A673 (cell line): ENCODE measurements at regions of chr6 and their contacts with region 1.

Region 1: GRCh38 chr6:20877008-20877937 is 343.0 kb downstream of the CDKAL1 start:
- DNase-seq: peak; percentile 17
- H3K4me3 ChIP-seq: no peak overlapping the region
- H3K27ac ChIP-seq: no peak overlapping the region
- H3K4me1 ChIP-seq: peaks cover 30% of the 10 kb centered on the region
- H3K27me3 ChIP-seq: no peaks in the 10 kb centered on the region
- CTCF ChIP-seq: no peak

Region 2: DNA sequence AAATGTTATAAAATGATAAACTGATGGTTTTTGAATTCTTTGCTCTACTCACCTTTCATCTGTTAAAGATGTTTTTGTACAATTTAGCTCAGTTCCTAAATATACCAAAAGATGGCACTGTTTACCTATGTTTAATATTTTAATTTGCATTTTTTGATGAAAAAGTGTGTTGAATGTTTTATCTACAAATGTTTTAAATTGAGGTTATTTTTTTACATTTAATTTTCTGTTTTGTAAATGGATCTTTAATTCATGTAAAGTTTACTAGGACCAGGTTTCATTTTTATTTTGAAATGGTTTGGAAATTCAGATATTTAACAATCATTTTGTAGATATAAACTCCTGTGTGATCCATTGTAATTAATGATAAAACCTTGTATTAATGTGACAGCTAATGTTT is 313.0 kb before region 1 on chr6:
- CTCF ChIA-PET with region 1: no interaction called
- POLR2A ChIA-PET with region 1: no interaction called
- intact Hi-C with region 1: loop called (anchors 5 kb)
- DNase-seq: peak; percentile 63
- H3K4me3 ChIP-seq: peak overlapping the region; percentile 12
- H3K27ac ChIP-seq: peak overlapping the region; percentile 52
- H3K4me1 ChIP-seq: peaks cover 48% of the 10 kb centered on the region
- H3K27me3 ChIP-seq: no peaks in the 10 kb centered on the region
- CTCF ChIP-seq: peak; percentile 71

Region 3: DNA sequence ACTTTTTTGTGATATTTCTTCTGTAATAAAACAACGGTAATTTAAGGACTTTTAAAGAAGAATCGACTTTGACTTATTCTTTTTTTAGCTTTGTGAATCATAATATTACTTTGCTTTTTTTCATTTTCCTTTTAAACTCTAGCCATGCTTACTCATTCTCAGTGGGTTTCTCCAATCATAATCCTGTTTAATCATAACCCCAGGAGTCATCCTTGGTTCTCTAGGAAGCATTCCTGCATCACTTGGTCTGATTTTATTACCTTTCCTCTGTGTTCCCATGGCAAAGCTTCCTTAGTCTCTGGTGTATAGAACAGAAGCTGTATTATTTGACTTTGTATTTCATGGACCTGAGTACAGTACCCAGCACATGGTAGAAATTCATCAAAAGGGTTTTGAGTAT is 119.5 kb before region 1 on chr6:
- CTCF ChIA-PET with region 1: no interaction called
- POLR2A ChIA-PET with region 1: no interaction called
- intact Hi-C with region 1: loop called (anchors 10 kb)
- DNase-seq: peak; percentile 80
- H3K4me3 ChIP-seq: no peak overlapping the region
- H3K27ac ChIP-seq: peak overlapping the region; percentile 87
- H3K4me1 ChIP-seq: peaks cover 38% of the 10 kb centered on the region
- H3K27me3 ChIP-seq: no peaks in the 10 kb centered on the region
- CTCF ChIP-seq: no peak

Region 4: DNA sequence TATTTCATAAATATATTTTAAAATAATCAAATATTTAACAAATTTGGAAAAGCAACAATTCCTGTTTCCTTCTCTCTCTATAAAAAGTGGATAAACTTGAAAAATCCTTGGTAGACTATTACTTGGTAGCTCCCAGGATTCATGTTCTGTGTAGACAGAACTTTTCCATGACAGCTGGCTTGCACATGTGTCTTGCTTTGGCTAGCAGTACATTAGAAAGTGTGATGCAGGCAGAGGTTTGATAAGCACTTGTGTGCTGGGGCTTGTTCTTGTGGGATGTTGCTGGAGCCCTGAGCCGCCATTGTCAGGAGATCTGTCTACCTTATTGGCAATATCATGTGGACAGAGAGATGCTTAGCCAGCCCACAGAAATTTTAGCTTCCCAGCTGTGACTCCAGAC is 15.8 kb before region 1 on chr6:
- CTCF ChIA-PET with region 1: interaction called, 13 read pairs
- POLR2A ChIA-PET with region 1: no interaction called
- intact Hi-C with region 1: no loop called
- DNase-seq: no peak
- H3K4me3 ChIP-seq: no peak overlapping the region
- H3K27ac ChIP-seq: no peak overlapping the region
- H3K4me1 ChIP-seq: peaks cover 6% of the 10 kb centered on the region
- H3K27me3 ChIP-seq: no peaks in the 10 kb centered on the region
- CTCF ChIP-seq: no peak

Region 5: GRCh38 chr6:20891161-20891560 is 13.9 kb after region 1 on chr6:
- CTCF ChIA-PET with region 1: no interaction called
- POLR2A ChIA-PET with region 1: no interaction called
- intact Hi-C with region 1: no loop called
- DNase-seq: no peak
- H3K4me3 ChIP-seq: no peak overlapping the region
- H3K27ac ChIP-seq: no peak overlapping the region
- H3K4me1 ChIP-seq: no peaks in the 10 kb centered on the region
- H3K27me3 ChIP-seq: no peaks in the 10 kb centered on the region
- CTCF ChIP-seq: no peak

Region 6: DNA sequence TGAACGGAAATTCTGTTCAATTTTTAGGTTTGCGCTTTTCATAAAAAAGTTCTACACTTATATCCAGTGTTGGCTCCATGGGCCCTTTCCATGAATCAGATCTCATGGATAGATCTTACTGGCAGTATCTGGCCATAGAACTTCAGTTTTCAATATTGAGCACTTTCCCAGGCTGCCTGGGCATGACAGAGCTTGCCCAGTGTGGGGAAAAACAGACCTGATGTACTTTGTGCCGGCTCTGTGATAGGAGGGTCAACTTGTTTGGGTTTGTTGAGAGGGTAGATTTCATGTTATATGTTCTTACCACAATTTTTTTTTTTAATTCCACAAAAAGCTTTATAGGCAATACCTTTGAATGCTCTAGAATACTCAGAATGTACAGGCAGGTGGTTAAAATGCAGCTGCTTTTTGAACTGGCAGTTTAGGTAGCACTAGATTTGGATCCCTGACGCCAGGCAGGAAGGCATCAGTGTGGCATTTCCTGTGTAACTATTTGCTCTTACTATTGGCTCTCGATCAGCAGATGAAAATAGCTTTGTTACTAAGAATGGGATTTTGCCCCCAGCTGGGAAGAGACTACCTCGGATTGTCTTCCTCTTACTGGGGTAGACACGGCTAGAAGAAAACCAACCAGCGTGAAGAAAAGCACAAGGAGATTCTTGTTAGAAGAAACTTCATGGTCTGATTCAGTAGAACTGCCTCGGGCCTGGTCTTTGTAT is 311.4 kb after region 1 on chr6:
- CTCF ChIA-PET with region 1: no interaction called
- POLR2A ChIA-PET with region 1: no interaction called
- intact Hi-C with region 1: loop called (anchors 10 kb)
- DNase-seq: peak; percentile 96
- H3K4me3 ChIP-seq: no peak overlapping the region
- H3K27ac ChIP-seq: peak overlapping the region; percentile 86
- H3K4me1 ChIP-seq: peaks cover 76% of the 10 kb centered on the region
- H3K27me3 ChIP-seq: no peaks in the 10 kb centered on the region
- CTCF ChIP-seq: no peak

Region 7: GRCh38 chr6:21450149-21450548 is 572.9 kb after region 1 on chr6:
- CTCF ChIA-PET with region 1: interaction called, 10 read pairs
- POLR2A ChIA-PET with region 1: no interaction called
- intact Hi-C with region 1: no loop called
- DNase-seq: no peak
- H3K4me3 ChIP-seq: no peak overlapping the region
- H3K27ac ChIP-seq: no peak overlapping the region
- H3K4me1 ChIP-seq: peaks cover under 1% of the 10 kb centered on the region
- H3K27me3 ChIP-seq: no peaks in the 10 kb centered on the region
- CTCF ChIP-seq: no peak

Region 8: DNA sequence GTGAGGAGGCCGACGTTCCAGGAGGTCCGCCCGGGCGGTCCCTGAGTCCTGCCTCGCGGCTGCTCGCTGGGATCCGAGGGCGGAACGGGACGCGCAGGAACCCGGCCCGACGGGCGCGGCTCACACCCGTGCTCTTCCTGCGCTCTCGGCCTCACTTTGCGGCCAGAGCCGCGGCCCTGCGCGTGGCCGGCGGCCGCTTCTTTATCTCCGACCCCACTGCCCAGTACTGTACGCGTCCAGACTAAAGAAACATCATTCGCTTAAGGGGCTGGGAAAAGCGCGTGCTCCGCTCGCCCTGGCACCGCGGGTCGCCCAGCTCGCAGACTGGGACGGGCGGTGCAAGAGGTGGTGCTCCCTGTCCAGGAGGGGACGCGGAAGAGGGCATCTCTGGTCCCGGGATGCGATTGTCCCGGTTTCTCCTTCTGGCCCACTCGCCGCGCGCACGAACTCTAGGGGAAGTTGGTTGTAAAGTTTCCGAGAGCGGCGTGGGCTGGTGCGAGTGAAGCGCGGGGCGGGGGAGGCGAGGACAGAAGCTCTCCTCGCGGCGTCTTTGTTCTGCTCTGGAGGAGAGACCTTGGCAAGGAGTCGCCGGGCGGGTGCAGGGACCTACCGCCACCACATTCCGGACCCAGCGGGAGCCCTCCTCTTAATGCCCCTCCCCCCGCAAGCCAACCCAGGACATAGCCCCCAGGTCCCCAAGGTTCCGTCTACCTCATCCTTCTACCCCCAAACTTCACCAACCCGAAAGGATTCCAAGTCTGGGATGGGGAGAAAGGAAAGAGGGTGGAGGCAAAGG is 787.2 kb after region 1 on chr6:
- CTCF ChIA-PET with region 1: no interaction called
- POLR2A ChIA-PET with region 1: no interaction called
- intact Hi-C with region 1: no loop called
- DNase-seq: peak; percentile 45
- H3K4me3 ChIP-seq: peak overlapping the region; percentile 41
- H3K27ac ChIP-seq: no peak overlapping the region
- H3K4me1 ChIP-seq: peaks cover 19% of the 10 kb centered on the region
- H3K27me3 ChIP-seq: peaks cover 76% of the 10 kb centered on the region
- CTCF ChIP-seq: no peak